ENCODE measurements at regions of chr1 and their contacts with region 1.

Region 1: GRCh38 chr1:16366722-16367257 is at the start of gene SZRD1:
- DNase-seq: peak; percentile 98
- ATAC-seq: peak; percentile 90
- H3K4me3 ChIP-seq: peak within 1 kb of the TSS; percentile 87 to 96 (median 94)
- H3K27ac ChIP-seq: peak within 1 kb of the TSS; percentile 88
- H3K4me1 ChIP-seq: peaks cover 77% of the 10 kb centered on the region
- H3K27me3 ChIP-seq: peaks cover 0 to 2% of the 10 kb centered on the region in 2 experiments; a peak in 1 of 5 replicates
- CTCF ChIP-seq: no peak
- EP300 ChIP-seq: no peak; a peak in 1 of 4 replicates
- POLR2A ChIP-seq: no peak
- RAD21 ChIP-seq: no peak
- total RNA-seq, gene SZRD1: 28.5 and 38.6 TPM in 2 replicates

Region 2: DNA sequence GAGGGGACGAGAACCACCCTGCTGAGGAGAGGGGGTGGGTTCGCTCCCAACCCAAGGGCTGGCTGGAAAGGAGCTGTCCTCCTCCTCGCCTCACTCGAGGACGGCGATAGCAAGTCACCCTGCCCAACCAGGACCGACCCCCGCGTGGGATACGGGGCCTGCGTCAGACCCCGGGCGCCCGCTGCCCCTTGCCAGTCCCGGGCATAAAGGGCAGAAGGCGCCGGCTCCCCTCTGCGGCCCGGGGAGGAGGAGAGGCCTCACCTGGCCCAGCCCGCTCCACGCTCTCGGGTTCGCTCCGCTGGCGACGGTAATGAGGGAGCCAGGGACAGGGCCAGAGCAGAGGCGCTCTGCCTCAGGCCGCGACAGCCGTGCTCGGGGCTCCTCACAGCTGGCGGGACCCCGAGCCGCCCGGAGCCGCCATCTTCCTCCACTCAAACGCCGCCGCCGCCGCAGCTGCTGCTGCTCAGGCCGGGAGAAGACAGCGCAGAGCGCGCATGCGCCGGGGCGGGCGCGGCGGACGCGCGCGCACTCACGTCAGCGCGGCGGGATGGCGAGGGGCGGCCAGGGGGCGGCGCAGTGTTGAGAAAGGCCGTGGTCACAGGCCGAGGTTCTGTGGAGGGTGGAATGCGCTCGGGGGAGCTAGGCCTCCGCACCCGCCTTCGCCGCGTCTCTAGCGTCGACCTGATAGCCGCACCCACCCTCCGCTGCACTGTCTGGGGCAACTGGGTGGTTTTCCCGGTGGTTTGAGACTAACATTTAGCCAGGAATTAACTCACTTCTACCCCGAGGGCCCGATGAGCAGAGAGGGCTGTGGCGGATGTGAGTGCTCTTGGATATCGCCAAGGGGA is 14.6 kb before region 1 on chr1 and contains the start of gene FBXO42:
- CTCF ChIA-PET with region 1: no interaction called
- POLR2A ChIA-PET with region 1: interaction called, 22 read pairs
- in situ Hi-C with region 1: no loop called
- intact Hi-C with region 1: loop called (anchors 1 kb)
- DNase-seq: peak; percentile 85
- ATAC-seq: peak; percentile 95
- H3K4me3 ChIP-seq: peak within 1 kb of the TSS; percentile 89 to 96 (median 92)
- H3K27ac ChIP-seq: peak within 1 kb of the TSS; percentile 74
- H3K4me1 ChIP-seq: peaks cover 37% of the 10 kb centered on the region
- H3K27me3 ChIP-seq: no peaks in the 10 kb centered on the region; a peak in 1 of 5 replicates
- CTCF ChIP-seq: peak; percentile 76
- EP300 ChIP-seq: no peak
- POLR2A ChIP-seq: peak; percentile 76 to 95
- RAD21 ChIP-seq: peak; percentile 64
- total RNA-seq, gene FBXO42: 7.6 and 9.0 TPM in 2 replicates

Region 3: GRCh38 chr1:16402742-16403141 is 36.0 kb after region 1 on chr1:
- CTCF ChIA-PET with region 1: no interaction called
- POLR2A ChIA-PET with region 1: no interaction called
- in situ Hi-C with region 1: no loop called
- intact Hi-C with region 1: no loop called
- DNase-seq: no peak
- ATAC-seq: no peak
- H3K4me3 ChIP-seq: no peak overlapping the region
- H3K27ac ChIP-seq: no peak overlapping the region
- H3K4me1 ChIP-seq: peaks cover 5% of the 10 kb centered on the region; the same call in 1 of the 2 replicates
- H3K27me3 ChIP-seq: no peaks in the 10 kb centered on the region
- CTCF ChIP-seq: no peak
- EP300 ChIP-seq: no peak
- POLR2A ChIP-seq: no peak
- RAD21 ChIP-seq: no peak